ENCODE measurements at regions of chr10 and their contacts with region 1.

Region 1: DNA sequence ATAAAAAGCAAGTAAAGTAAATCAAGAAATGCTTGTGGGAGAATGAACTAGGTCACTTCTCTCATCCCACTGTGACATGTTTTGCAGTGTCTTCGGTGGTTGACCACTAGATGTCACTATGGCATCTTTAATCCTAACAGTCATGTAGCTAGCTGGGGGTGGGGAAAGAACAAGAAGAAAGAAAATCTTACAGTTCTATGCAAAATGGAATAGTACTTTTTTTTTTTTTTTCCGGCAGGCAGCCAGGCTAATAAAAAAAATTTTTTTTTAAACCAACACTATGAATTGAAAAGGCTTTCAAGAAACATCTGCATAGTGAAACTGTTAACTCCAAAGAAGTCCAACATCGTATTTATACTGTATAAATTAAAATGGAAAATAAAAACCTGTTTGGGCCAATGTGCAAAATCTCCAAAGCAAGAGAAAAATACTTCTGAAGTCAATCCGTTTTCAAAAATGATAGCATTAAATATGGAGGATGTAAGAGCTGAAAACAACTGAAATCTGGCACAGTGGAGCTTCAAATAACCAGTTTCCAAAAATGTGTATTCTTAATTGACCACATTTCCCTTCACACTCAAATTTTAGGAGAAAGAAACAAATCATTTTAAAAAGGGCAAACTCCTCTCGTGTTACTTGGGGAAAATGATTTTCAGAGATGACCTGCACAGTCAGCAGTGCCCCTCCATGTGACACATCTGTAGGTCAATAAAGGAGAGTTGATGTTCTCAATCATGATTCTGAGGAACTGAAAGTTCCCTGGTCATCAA is 38.5 kb downstream of the CDK1 start:
- DNase-seq: peak; percentile 72
- H3K4me3 ChIP-seq: no peak overlapping the region
- H3K27ac ChIP-seq: peak overlapping the region in 1 of 2 donors; percentile 28
- H3K4me1 ChIP-seq: no peaks in the 10 kb centered on the region
- H3K27me3 ChIP-seq: no peaks in the 10 kb centered on the region
- CTCF ChIP-seq: peak; percentile 54 to 84 (median 74)
- POLR2A ChIP-seq: no peak

Region 2: DNA sequence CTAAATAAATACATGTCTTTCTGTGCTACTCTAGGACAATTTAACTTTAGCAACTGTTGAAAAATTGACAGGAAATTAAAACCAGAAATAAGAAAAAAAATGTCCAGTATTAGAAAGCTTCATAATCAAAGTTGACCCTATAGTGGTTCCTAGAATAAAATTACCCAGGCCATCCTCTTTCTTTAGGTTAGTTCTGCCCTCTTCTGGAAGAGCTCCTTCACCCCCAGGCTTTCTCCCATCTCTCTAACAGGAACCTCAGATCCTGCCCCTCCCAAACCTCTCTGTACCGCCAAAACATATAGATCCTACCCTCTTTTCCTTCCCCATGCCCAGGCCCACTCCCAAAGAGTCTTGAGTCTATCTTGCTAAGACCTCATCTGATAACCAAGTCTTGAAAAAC is 198.0 kb before region 1 on chr10:
- intact Hi-C with region 1: no loop called
- DNase-seq: no peak
- H3K4me3 ChIP-seq: no peak overlapping the region
- H3K27ac ChIP-seq: no peak overlapping the region
- H3K4me1 ChIP-seq: no peaks in the 10 kb centered on the region
- H3K27me3 ChIP-seq: no peaks in the 10 kb centered on the region
- CTCF ChIP-seq: no peak
- POLR2A ChIP-seq: no peak

Region 3: DNA sequence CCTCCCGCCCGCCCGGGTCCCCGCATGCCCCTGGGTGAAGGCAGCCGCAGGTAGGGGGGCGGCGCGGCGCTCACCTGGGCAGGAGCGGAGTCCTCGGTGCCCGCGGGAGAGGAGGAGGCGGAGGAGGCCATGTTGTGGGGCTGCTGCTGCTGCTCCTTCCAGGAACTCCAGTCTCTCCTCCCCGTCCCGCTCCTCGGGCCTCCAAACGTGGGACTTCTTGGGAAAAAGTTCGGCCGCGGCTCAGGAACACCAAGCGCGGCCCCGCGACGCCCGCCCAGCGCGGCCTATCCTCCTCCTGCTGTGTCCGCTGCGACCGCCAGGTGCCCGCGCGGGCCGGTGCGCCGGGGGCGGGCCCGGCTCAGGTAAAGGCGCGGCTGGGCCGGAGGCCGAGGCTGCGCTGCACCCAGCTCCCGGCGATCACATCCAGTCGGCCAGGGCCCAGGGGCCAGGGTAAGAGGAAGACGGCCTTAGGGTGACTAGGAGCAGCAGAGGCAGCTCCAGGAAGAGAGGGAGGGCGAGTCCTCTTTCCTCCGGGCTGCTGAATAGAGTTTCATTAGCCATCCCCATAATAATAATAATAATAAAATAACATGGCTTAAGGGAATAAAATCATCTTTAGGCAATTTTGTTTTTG is 83.5 kb before region 1 on chr10:
- intact Hi-C with region 1: no loop called
- DNase-seq: peak; percentile 60
- H3K4me3 ChIP-seq: peak overlapping the region; percentile 58 to 63
- H3K27ac ChIP-seq: peak overlapping the region; percentile 91
- H3K4me1 ChIP-seq: no peaks in the 10 kb centered on the region
- H3K27me3 ChIP-seq: no peaks in the 10 kb centered on the region
- CTCF ChIP-seq: peak in 2 of 4 experiments; percentile 58 to 65
- POLR2A ChIP-seq: peak; percentile 52

Region 4: DNA sequence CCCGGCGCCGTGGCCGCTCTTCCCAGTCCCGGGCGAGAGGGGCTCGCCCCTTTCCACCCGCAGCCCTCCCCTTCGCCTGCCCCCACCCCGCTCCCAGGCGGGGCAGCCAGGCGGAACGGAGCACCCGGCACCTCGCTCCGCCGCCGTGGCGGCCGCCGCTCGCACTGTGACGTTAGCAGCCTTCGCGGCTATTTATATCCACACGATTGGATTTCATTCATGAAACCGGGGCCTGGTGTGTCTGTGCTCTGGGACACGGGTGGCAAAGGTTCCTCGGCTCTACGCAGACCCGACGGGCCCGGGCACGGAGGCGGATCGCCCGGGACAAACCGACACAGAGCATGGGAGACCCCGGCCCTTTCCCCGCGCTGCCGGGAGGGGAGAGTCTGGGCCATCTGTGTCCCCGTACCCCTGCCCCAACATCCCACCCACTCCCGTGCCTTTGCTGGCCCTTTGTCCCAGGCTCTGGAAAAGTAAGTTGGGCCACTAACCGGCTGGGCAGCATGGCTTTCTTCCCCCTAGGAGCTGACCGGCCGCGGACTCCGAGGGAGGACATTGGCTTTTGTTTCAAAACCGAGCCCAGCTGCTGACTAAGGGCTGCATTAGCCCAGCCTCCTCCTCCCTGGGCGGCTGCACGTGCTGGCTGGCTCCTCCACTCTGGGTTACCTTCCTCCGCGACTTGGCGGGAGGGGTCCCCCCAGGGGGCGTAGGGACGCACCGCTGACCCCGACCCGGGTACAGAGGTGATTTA is 127.5 kb after region 1 on chr10 and contains the start of gene RHOBTB1:
- intact Hi-C with region 1: loop called (anchors 5 kb)
- DNase-seq: peak; percentile 53
- H3K4me3 ChIP-seq: peak within 1 kb of the TSS; percentile 53 to 68
- H3K27ac ChIP-seq: peak within 1 kb of the TSS; percentile 84 to 88
- H3K4me1 ChIP-seq: no peaks in the 10 kb centered on the region
- H3K27me3 ChIP-seq: no peaks in the 10 kb centered on the region
- CTCF ChIP-seq: no peak
- POLR2A ChIP-seq: peak; percentile 50
- total RNA-seq, gene RHOBTB1: 4.9 to 28.9 TPM

Region 5: DNA sequence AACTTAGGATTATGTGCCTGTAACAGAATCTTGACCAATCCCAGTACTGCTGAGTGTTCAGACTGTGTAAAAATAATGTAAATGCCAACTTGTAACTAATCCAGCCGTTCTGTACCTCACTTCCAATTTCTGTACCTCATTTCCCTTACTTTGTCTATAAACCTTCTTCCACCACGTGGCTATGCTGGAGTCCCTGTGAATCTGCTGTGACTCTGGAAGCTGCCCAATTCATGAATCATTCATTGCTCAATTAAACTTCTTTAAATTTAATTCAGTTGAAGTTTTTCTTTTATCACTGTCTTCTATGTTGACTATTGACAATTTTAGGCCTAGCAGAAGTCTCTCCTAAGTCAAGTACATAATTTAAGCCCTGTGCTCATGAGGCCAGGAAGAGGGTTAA is 342.4 kb after region 1 on chr10:
- intact Hi-C with region 1: loop called (anchors 10 kb)
- DNase-seq: peak; percentile 23
- H3K4me3 ChIP-seq: no peak overlapping the region
- H3K27ac ChIP-seq: no peak overlapping the region
- H3K4me1 ChIP-seq: no peaks in the 10 kb centered on the region
- H3K27me3 ChIP-seq: no peaks in the 10 kb centered on the region
- CTCF ChIP-seq: no peak
- POLR2A ChIP-seq: no peak

Region 6: DNA sequence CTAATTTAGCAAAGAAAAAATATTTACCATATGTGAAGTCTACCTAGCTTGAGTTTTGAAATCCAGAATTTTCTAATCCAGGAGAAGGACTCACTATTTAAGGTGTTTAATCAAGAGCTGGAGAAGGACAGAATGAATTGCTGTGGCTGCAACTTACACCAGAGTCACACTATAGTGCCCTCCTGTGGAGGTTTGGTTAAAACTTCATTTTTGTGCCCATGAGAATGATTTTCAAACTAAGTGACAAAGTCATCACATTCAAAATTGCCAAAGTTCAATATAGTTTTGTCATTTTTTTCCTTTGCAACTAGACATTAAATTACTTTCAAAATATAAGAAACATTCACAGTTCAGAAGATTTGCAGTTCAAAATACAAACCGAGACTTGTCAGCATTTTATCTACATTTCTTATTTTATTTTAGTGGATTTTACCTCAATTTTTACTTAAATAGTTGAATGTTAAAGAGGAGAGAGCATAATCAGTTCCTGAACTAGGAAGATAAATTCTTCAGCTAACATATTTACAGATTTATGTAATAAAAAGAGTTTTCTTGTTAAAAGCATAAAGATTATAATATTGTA is 916.6 kb after region 1 on chr10:
- intact Hi-C with region 1: loop called (anchors 10 kb)
- DNase-seq: peak; percentile 51
- H3K4me3 ChIP-seq: no peak overlapping the region
- H3K27ac ChIP-seq: no peak overlapping the region
- H3K4me1 ChIP-seq: no peaks in the 10 kb centered on the region
- H3K27me3 ChIP-seq: no peaks in the 10 kb centered on the region
- CTCF ChIP-seq: peak; percentile 11 to 73 (median 62)
- POLR2A ChIP-seq: no peak

Region 7: GRCh38 chr10:62048919-62049623 is 1232.3 kb after region 1 on chr10:
- intact Hi-C with region 1: loop called (anchors 10 kb)
- DNase-seq: peak; percentile 85
- H3K4me3 ChIP-seq: peak overlapping the region; percentile 30 to 32
- H3K27ac ChIP-seq: peak overlapping the region; percentile 85 to 87
- H3K4me1 ChIP-seq: peaks cover 13% of the 10 kb centered on the region
- H3K27me3 ChIP-seq: no peaks in the 10 kb centered on the region
- CTCF ChIP-seq: no peak
- POLR2A ChIP-seq: peak; percentile 85